Heart left ventricle (tissue), 16 donors: ENCODE measurements at regions of chr1 and their contacts with region 1.

Region 1: GRCh38 chr1:48031676-48032075 is 34.5 kb upstream of the TRABD2B start:
- DNase-seq: no peak
- ATAC-seq: peak in 1 of 4 donors; percentile 29
- H3K4me3 ChIP-seq: no peak overlapping the region
- H3K27ac ChIP-seq: no peak overlapping the region
- H3K4me1 ChIP-seq: peaks cover 0 to 4% (median 0%) of the 10 kb centered on the region in 12 donors
- H3K27me3 ChIP-seq: no peaks in the 10 kb centered on the region
- CTCF ChIP-seq: no peak
- POLR2A ChIP-seq: no peak

Region 2: GRCh38 chr1:47388891-47389238 is 642.8 kb before region 1 on chr1:
- intact Hi-C with region 1: loop called in 1 of 10 experiments (anchors 5 kb)
- DNase-seq: peak in 4 of 5 donors; percentile 30 to 60 (median 41)
- ATAC-seq: peak; percentile 21 to 77 (median 70)
- H3K4me3 ChIP-seq: no peak overlapping the region
- H3K27ac ChIP-seq: no peak overlapping the region
- H3K4me1 ChIP-seq: peaks cover 0 to 10% (median 0%) of the 10 kb centered on the region in 12 donors
- H3K27me3 ChIP-seq: peaks cover 0 to 11% (median 0%) of the 10 kb centered on the region in 9 donors
- CTCF ChIP-seq: peak; percentile 50 to 70 (median 62)
- POLR2A ChIP-seq: no peak

Region 3: GRCh38 chr1:48164571-48164970 is 132.9 kb after region 1 on chr1:
- intact Hi-C with region 1: no loop called
- DNase-seq: no peak
- ATAC-seq: no peak
- H3K4me3 ChIP-seq: no peak overlapping the region
- H3K27ac ChIP-seq: no peak overlapping the region
- H3K4me1 ChIP-seq: peaks cover 0 to 10% (median 0%) of the 10 kb centered on the region in 12 donors
- H3K27me3 ChIP-seq: no peaks in the 10 kb centered on the region
- CTCF ChIP-seq: no peak
- POLR2A ChIP-seq: no peak